ENCODE measurements at regions of chr10 and their contacts with region 1.

Region 1: DNA sequence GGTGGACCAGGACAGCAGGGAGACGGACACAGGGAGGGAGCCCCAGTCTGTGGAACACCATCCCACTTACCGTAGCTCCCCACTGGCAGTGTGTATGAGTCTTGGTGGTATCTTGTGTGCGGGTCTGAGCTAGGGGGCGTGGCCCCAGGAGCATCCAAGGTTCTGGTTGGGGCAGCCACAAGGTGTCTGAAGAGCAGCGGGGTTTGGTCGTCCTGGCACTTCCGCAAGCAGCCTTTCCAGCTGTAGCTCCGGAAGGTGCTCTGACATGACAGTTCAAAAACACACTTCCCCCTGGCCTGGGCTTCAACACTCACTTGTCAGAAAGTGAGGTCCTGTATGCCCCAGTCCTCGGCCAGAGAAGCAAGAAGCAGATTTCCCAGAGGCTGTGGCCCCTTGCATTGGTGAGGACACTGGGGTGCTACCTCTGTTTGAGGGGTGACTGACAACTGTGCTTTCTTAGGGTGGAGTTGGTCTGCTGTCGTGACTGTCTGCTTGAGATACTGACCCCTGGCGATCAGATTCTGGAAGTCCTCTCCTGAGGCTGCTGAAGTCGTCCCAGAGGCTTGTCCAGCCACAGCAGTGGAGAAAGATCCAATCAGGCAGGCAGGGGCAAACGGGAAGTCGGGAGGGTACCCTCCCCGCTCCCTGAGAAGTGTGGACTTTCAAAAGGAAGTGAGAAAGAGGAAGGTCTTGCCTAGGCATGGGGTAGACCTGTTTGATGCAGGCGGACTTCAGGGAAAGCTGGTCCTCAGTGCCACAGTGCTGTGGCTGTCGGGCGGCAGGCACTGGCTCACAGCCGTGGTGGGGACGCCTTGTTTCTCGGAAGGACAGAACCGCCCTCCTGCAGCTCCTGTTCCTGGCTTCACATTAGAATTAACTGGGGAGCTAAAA is 51.4 kb upstream of the PFKFB3 start:
- DNase-seq: peak in 7 of 9 experiments; percentile 21 to 78 (median 54)
- ATAC-seq: peak; percentile 69
- H3K4me3 ChIP-seq: peak overlapping the region in 1 of 2 experiments; percentile 12
- H3K4me3 Mint-ChIP-seq: peak overlapping the region; percentile 70
- H3K27ac ChIP-seq: peak overlapping the region in 1 of 2 experiments; percentile 49
- H3K27ac Mint-ChIP-seq: peak overlapping the region; percentile 84
- H3K4me1 ChIP-seq: peaks cover 35% of the 10 kb centered on the region
- H3K4me1 Mint-ChIP-seq: peaks cover 53% of the 10 kb centered on the region
- H3K27me3 ChIP-seq: no peaks in the 10 kb centered on the region
- H3K27me3 Mint-ChIP-seq: no peaks in the 10 kb centered on the region
- CTCF ChIP-seq: peak; percentile 37

Region 2: DNA sequence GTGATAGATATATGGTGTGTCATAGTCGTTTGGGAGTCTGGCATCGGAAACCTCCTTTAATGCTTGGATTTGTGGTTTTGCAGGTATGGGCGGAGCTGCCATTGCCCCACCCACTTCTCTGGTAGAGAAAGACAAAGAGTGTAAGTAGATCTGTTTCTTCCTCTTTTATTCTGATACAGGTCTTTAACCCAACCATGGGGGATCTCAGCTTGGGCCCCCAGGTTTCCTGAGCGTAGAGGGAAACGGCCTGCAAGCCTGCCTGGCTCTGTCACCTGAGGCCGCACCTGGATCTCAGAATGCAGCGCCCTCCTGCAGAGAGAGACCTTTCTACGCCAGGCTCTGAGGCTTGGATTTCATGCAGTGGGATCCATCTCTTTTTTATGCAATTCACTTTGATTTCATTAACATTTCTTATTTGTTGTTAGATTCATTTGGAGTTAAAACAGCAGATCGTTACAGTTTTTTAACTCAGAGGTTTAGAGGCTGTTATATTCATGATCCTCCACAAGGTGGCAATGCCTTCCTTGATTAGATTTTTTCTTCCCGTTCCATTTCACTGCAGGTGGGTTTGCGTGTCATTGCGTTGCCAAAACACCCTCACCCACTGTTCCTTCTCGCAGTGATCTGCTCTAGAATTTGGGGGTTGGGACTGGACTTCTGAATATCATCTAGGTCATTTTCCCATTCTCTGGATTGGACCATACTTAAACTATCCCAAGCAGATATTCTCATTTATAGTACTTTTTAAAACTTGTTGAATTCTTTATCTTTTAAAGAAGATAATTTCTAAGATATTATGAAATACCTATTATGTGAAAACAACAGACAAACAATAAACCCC is 42.5 kb before region 1 on chr10:
- CTCF ChIA-PET with region 1: interaction called, 46 read pairs
- POLR2A ChIA-PET with region 1: no interaction called
- intact Hi-C with region 1: loop called (anchors 1 kb)
- DNase-seq: peak in 5 of 9 experiments; percentile 15 to 77 (median 44)
- ATAC-seq: peak; percentile 85
- H3K4me3 ChIP-seq: no peak overlapping the region
- H3K4me3 Mint-ChIP-seq: peak overlapping the region; percentile 53
- H3K27ac ChIP-seq: no peak overlapping the region
- H3K27ac Mint-ChIP-seq: peak overlapping the region; percentile 62
- H3K4me1 ChIP-seq: peaks cover 8% of the 10 kb centered on the region
- H3K4me1 Mint-ChIP-seq: peaks cover 29% of the 10 kb centered on the region
- H3K27me3 ChIP-seq: no peaks in the 10 kb centered on the region
- H3K27me3 Mint-ChIP-seq: no peaks in the 10 kb centered on the region
- CTCF ChIP-seq: peak; percentile 86

Region 3: DNA sequence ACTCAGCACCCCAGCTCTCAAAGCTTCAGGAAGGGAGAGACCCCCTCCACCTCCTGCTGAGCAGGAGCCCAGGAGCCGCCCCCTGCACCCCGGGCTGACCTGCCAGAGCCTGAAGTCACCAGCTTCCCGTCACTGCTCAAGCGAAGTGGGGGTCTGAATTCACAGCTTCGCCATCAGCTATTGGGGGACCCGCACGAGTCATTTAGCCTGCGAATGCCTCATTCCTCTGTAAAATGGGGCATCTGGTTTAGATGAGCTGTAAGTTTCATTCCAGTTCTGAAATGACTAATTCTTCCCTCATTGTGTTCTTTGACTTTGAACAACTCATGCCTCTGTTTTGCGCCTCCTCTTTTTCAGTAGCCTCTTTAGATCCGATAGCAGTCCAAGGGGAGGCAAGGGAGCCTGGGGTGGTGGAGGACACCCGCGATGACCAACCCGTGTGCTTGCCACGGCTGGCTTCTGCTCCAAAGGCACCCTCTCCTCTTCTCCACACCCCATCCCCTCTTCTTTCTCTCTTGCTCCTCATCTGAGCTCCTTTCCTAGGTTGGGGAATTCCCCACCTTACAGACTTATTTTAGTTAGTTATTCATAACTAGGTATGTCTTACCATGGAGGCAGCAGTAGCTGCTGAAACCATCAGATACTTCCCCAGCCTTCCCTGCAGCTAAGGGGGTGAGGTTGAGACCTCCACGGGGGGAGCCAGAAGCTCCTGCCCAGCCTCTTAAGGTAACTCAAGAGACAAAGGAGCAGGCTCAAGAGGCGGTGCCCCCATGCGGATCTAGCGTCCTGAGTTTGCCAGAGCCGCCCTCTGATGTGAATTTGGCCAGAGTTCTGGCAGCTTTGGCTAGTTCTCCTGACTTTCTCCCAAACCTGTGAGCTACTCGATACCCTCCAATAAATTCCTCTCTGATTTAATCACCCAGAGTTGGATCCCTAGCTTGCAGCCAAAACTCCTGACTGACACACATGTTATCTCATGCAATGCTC is 14.8 kb before region 1 on chr10:
- CTCF ChIA-PET with region 1: interaction called, 22 read pairs
- POLR2A ChIA-PET with region 1: no interaction called
- intact Hi-C with region 1: no loop called
- DNase-seq: peak in 1 of 9 experiments; percentile 16
- ATAC-seq: peak; percentile 27
- H3K4me3 ChIP-seq: no peak overlapping the region
- H3K4me3 Mint-ChIP-seq: no peak overlapping the region
- H3K27ac ChIP-seq: no peak overlapping the region
- H3K27ac Mint-ChIP-seq: no peak overlapping the region
- H3K4me1 ChIP-seq: peaks cover 14% of the 10 kb centered on the region
- H3K4me1 Mint-ChIP-seq: peaks cover 25% of the 10 kb centered on the region
- H3K27me3 ChIP-seq: no peaks in the 10 kb centered on the region
- H3K27me3 Mint-ChIP-seq: peaks cover 8% of the 10 kb centered on the region
- CTCF ChIP-seq: no peak

Region 4: DNA sequence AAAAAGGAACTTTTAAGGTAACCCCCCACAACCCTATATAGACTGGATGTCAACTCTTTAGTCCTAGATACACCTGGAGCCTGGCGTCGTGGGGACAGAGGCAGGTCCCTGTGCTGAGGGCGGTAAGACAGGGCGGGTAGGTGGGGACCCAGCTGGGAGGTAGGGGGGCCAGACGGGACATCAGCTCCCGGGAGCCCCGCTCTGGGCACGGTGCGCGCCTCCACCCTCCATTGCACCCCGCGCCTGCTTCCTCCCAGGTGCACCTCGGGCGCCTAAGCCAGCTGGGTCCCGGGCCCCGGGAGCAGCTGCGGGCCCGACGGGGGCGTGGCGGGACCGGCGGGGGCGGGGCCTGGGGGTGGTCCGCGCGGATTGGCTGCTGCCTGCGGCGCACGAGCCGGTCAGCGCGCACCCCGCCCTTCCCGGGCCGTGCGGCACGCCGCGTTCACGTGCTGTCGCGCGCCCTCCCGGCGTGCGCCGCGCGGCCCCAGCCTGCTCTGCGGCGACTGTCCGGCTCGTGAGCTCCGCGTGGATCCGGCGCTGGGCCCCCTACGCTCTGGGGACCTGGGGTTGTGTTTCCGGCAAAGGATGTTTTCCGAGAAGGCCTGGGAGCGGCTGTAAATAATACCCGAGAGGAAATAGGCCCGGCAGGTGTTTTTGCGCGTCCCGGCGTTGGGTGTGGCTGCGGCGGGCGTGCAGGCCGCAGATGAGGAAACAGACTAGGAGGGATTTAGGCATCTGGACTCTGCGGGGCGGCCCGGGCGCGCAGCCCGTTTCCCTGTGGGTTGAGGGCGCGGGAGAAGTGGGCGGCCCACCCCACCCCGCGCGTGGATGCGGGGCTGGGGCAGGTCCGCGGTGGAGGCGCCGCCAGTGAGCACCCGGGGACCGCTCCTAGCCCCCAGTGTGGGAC is 12.3 kb after region 1 on chr10:
- CTCF ChIA-PET with region 1: interaction called, 19 read pairs
- POLR2A ChIA-PET with region 1: interaction called, 8 read pairs
- intact Hi-C with region 1: no loop called
- DNase-seq: peak; percentile 80 to 97 (median 92)
- ATAC-seq: peak; percentile 91
- H3K4me3 ChIP-seq: peak overlapping the region; percentile 76 to 81
- H3K4me3 Mint-ChIP-seq: peak overlapping the region; percentile 92
- H3K27ac ChIP-seq: peak overlapping the region; percentile 86 to 90
- H3K27ac Mint-ChIP-seq: peak overlapping the region; percentile 98
- H3K4me1 ChIP-seq: peaks cover 31% of the 10 kb centered on the region
- H3K4me1 Mint-ChIP-seq: peaks cover 54% of the 10 kb centered on the region
- H3K27me3 ChIP-seq: no peaks in the 10 kb centered on the region
- H3K27me3 Mint-ChIP-seq: no peaks in the 10 kb centered on the region
- CTCF ChIP-seq: no peak